ENCODE measurements at regions of chr6 and their contacts with region 1.

Region 1: DNA sequence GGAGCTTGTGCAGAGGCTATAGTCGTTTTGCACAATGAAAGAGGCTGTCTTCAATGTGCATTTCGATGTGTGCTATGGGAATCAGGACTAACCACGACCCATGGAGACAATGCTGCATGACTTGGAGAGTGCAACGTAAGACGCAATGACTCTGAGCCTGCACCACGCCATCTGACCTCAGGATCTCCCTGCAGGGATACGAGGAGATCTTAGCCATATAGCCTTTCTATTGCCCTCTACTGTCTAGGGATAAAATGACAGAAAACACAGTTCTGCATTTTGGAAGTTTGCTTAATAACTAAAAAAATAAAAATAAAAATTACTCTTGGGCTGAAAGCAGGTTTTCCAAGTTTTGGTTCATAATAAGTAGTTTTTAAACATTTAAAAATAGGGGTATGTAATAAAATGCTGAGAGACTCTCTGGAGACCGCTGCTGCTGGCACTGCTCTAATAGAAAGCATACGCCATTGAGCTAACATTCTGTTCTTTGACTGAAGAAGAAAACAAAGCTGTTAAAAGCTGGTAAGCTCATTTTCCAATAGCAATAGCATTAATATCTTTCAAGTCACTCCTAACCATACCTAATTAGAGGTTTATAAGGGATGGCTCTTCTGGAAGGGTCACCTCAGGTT is 87.2 kb downstream of the PDE7B start:
- DNase-seq: peak; percentile 38
- H3K4me3 Mint-ChIP-seq: no peak overlapping the region
- H3K27ac Mint-ChIP-seq: no peak overlapping the region
- H3K4me1 Mint-ChIP-seq: peaks cover 25% of the 10 kb centered on the region
- H3K27me3 Mint-ChIP-seq: no peaks in the 10 kb centered on the region
- CTCF ChIP-seq: peak; percentile 30

Region 2: DNA sequence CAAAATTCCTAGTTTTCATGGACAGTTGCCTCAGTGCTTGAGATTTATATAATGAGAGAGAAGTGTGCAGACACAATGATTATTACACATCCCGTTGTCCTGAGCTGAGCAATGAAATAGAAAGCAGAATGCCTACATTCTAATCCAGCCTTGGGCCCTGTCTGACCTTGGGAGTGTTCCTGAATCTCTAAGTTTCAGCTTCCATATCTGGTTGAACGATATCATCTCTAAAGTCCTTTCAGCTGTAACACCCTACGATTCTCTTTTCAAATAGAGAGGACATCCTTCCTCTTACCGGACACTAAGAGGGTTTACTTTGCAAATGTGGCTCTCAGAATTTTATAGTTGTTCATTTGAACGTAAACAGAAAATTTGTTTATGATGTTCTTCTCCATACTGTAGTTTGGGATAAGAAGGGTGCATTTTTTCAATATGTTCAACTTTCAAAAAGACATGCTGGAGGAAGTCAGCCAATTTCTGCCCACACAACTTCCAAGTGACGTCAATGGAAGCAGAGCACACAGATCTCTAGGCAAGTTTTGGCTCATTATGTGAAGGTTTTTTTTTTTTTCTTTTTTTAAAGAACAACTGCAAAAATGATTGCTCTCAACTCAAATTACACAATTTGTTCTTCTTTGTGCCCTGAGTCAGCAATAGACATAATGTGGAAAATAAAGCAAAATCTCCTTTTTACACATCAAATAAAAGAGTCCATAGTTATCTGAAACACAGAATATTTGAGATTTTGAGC is 36.7 kb before region 1 on chr6:
- CTCF ChIA-PET with region 1: no interaction called
- POLR2A ChIA-PET with region 1: interaction called, 5 read pairs
- intact Hi-C with region 1: loop called (anchors 1 kb)
- DNase-seq: peak; percentile 87
- H3K4me3 Mint-ChIP-seq: peak overlapping the region; percentile 63
- H3K27ac Mint-ChIP-seq: peak overlapping the region; percentile 92
- H3K4me1 Mint-ChIP-seq: peaks cover 41% of the 10 kb centered on the region
- H3K27me3 Mint-ChIP-seq: no peaks in the 10 kb centered on the region
- CTCF ChIP-seq: no peak

Region 3: GRCh38 chr6:135922174-135922573 is 16.5 kb before region 1 on chr6:
- CTCF ChIA-PET with region 1: interaction called, 4 read pairs
- POLR2A ChIA-PET with region 1: interaction called, 7 read pairs
- intact Hi-C with region 1: loop called (anchors 2 kb)
- DNase-seq: peak; percentile 98
- H3K4me3 Mint-ChIP-seq: peak overlapping the region; percentile 15
- H3K27ac Mint-ChIP-seq: peak overlapping the region; percentile 93
- H3K4me1 Mint-ChIP-seq: peaks cover 14% of the 10 kb centered on the region
- H3K27me3 Mint-ChIP-seq: no peaks in the 10 kb centered on the region
- CTCF ChIP-seq: no peak

Measured in MCF 10A (cell line).